Activated naive CD4-positive, alpha-beta T cell treated with anti-CD3 and anti-CD28 coated beads, Interleukin-2, amount 10 ng/mL, durations not matched to agents 7 days and 5 days (primary cell): ENCODE measurements at regions of chr10 and their contacts with region 1.

Region 1: GRCh38 chr10:128150045-128150493 is 23.8 kb upstream of the MKI67 start:
- DNase-seq: peak; percentile 85
- H3K4me3 Mint-ChIP-seq: peak overlapping the region; percentile 66
- H3K27ac Mint-ChIP-seq: no peak overlapping the region
- H3K4me1 Mint-ChIP-seq: peaks cover 9% of the 10 kb centered on the region
- H3K27me3 Mint-ChIP-seq: peaks cover 59% of the 10 kb centered on the region

Region 2: DNA sequence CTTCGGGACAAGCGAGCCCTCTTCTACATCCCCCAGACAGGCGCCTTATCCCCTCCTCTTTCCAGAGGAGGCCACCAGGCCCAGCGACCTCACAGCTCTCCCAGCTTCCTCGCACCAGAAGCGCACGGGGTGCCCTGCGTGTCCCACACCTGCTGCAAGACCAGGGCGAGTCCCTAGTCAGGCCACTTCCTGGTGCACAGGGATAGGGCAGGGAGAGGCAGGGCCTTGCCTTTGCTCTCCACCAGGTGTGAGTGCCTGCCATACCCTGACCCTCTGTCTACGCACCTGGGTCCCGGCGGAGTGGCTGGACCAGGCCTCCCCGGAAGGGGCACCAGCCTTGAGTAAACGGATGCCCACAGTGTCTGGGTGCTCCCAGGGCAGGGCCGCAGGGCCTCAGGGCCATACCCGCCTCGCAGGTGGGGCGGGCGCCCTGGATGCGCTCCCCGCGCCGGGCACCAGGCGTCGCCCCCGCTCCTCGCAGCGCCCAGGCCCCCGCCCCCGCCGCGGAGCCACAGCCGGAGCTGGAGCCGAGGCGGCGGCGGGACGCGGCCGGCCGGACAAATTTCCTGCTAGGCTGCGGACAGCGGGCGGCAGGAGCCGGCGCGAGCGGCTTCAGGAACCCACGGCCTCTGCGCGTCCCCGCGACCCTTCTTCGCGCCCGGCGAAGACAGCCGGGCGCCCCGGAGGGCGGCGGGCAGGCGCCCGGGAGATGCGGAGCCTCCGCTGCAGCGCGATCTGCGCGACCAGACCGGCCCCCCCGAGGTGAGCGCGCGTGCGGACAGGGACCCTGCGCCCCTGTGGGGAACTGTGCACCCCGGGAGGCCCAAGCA is 243.3 kb before region 1 on chr10 and contains the start of gene PTPRE:
- CTCF ChIA-PET with region 1: interaction called, 13 read pairs
- DNase-seq: peak; percentile 68
- H3K4me3 Mint-ChIP-seq: no peak within 1 kb of the TSS
- H3K27ac Mint-ChIP-seq: no peak within 1 kb of the TSS
- H3K4me1 Mint-ChIP-seq: no peaks in the 10 kb centered on the region
- H3K27me3 Mint-ChIP-seq: peaks cover 64% of the 10 kb centered on the region

Region 3: GRCh38 chr10:128078136-128078969 is 71.7 kb before region 1 on chr10:
- CTCF ChIA-PET with region 1: interaction called, 52 read pairs
- DNase-seq: peak; percentile 60
- H3K4me3 Mint-ChIP-seq: no peak overlapping the region
- H3K27ac Mint-ChIP-seq: no peak overlapping the region
- H3K4me1 Mint-ChIP-seq: peaks cover 8% of the 10 kb centered on the region
- H3K27me3 Mint-ChIP-seq: no peaks in the 10 kb centered on the region

Region 4: DNA sequence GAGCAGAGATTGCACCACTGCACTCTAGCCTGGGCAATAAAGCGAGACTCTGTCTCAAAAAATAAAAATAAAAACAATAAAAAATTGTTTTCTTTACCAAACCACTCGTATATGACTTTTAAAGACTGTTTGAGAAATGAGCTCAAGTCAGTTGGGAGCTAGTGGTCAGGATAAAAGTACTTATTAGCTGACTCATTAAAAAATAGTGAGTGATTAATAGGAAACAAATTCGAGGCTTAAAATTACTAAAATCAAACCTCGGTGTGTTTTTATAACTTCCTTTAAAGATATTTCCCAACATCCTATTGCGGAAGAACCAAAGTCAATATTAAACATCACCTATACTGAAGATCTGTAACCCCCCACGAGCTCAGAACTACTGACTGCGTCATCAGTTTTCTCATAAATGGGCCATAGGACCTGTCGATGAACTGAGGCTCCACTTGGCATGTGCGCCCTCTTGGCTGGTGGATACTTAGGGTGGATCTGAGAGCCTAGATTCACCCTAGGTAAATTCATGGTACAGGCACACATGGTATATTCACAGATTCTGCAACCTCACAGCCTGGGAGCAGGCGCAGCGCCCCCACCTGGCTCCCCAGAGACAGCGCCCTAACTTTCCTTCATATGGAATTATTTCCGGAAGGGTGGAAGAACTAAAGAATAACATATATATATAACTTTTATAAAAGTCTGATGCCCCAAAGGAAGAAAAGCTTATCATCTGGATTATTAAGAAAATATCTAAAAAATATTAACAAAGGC is 33.0 kb before region 1 on chr10:
- CTCF ChIA-PET with region 1: interaction called, 10 read pairs
- DNase-seq: no peak
- H3K4me3 Mint-ChIP-seq: no peak overlapping the region
- H3K27ac Mint-ChIP-seq: no peak overlapping the region
- H3K4me1 Mint-ChIP-seq: peaks cover 37% of the 10 kb centered on the region
- H3K27me3 Mint-ChIP-seq: no peaks in the 10 kb centered on the region

Region 5: DNA sequence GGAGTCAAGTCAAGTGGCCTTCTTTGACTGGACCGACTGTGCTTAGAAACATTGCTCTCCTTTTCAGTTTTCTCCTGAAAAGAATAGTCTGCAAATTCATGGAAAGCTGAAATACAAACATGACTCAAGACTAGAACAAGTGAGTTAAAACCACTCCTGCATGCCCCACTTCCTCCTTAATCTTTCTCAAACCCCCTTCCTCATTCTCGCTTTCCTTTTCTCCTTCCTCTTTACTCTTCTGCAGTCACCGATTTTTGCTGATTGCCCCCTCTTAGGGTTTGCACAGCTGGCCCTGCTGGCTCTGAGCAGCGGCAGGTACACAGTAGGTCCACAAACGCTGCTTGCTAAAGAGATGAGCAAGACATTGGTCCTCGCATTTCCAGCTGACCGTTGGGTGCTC is 11.0 kb after region 1 on chr10:
- CTCF ChIA-PET with region 1: interaction called, 11 read pairs
- DNase-seq: no peak
- H3K4me3 Mint-ChIP-seq: no peak overlapping the region
- H3K27ac Mint-ChIP-seq: no peak overlapping the region
- H3K4me1 Mint-ChIP-seq: peaks cover 22% of the 10 kb centered on the region
- H3K27me3 Mint-ChIP-seq: peaks cover 36% of the 10 kb centered on the region